GM12878 (cell line): ENCODE measurements at regions of chr6 and their contacts with region 1.

Region 1: GRCh38 chr6:136613477-136613876 is 63.3 kb upstream of the MAP7 start:
- DNase-seq: no peak
- ATAC-seq: no peak
- H3K4me3 ChIP-seq: no peak overlapping the region
- H3K27ac ChIP-seq: no peak overlapping the region
- H3K4me1 ChIP-seq: no peaks in the 10 kb centered on the region
- H3K27me3 ChIP-seq: no peaks in the 10 kb centered on the region
- CTCF ChIP-seq: no peak
- EP300 ChIP-seq: no peak
- POLR2A ChIP-seq: no peak
- RAD21 ChIP-seq: no peak

Region 2: DNA sequence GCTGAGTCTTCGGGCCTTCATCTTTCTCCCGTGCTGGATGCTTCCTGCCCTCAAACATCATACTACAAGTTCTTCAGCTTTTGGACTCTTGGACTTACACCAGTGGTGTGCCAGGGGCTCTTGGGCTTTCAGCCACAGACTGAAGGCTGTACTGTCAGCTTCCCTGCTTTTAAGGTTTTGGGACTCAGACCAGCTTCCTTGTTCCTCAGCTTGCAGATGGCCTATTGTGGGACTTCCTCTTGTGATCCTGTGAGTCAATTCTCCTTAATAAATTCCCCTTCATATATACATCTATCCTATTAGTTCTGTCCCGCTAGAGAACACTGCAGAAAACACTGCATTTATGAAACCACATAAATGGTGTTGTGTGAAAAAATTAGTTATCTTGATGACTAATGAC is 310.0 kb before region 1 on chr6:
- CTCF ChIA-PET with region 1: no interaction called
- POLR2A ChIA-PET with region 1: no interaction called
- RAD21 ChIA-PET with region 1: no interaction called
- SMC1A ChIA-PET with region 1: no interaction called
- in situ Hi-C with region 1: no loop called
- intact Hi-C with region 1: no loop called
- DNase-seq: no peak
- ATAC-seq: no peak
- H3K4me3 ChIP-seq: no peak overlapping the region
- H3K27ac ChIP-seq: no peak overlapping the region
- H3K4me1 ChIP-seq: no peaks in the 10 kb centered on the region
- H3K27me3 ChIP-seq: no peaks in the 10 kb centered on the region; a peak in 3 of 4 replicates
- CTCF ChIP-seq: no peak
- EP300 ChIP-seq: no peak
- POLR2A ChIP-seq: no peak
- RAD21 ChIP-seq: no peak

Region 3: DNA sequence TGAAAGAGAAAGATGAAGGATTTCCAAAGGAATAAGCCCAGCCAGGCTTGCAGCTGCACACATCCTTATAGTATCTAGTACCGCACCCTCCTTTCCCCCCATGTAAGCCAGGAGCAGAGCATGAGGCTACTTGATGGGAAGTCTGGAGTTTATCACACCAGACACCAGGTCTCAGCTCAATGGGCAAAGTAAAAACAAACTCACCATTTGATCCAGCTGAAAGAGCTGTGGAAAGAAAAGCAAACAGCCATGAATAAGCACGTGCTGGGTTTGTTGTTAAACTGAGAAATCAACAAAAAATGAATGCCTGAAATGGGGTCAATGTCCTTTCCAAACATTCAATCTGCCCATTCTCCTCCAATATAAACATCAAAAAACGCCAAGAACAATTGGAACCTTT is 12.7 kb before region 1 on chr6:
- CTCF ChIA-PET with region 1: interaction called, 11 read pairs
- POLR2A ChIA-PET with region 1: interaction called, 3 read pairs
- RAD21 ChIA-PET with region 1: no interaction called
- SMC1A ChIA-PET with region 1: interaction called, 9 read pairs
- in situ Hi-C with region 1: no loop called
- intact Hi-C with region 1: no loop called
- DNase-seq: no peak
- ATAC-seq: no peak
- H3K4me3 ChIP-seq: no peak overlapping the region
- H3K27ac ChIP-seq: no peak overlapping the region
- H3K4me1 ChIP-seq: no peaks in the 10 kb centered on the region
- H3K27me3 ChIP-seq: no peaks in the 10 kb centered on the region
- CTCF ChIP-seq: no peak
- EP300 ChIP-seq: no peak
- POLR2A ChIP-seq: no peak
- RAD21 ChIP-seq: no peak

Region 4: GRCh38 chr6:137089305-137089704 is 475.8 kb after region 1 on chr6:
- CTCF ChIA-PET with region 1: no interaction called
- POLR2A ChIA-PET with region 1: no interaction called
- RAD21 ChIA-PET with region 1: no interaction called
- SMC1A ChIA-PET with region 1: no interaction called
- in situ Hi-C with region 1: no loop called
- intact Hi-C with region 1: no loop called
- DNase-seq: no peak
- ATAC-seq: no peak
- H3K4me3 ChIP-seq: no peak overlapping the region
- H3K27ac ChIP-seq: no peak overlapping the region
- H3K4me1 ChIP-seq: peaks cover 39% of the 10 kb centered on the region
- H3K27me3 ChIP-seq: no peaks in the 10 kb centered on the region
- CTCF ChIP-seq: no peak
- EP300 ChIP-seq: no peak
- POLR2A ChIP-seq: no peak
- RAD21 ChIP-seq: no peak